K562 (cell line): ENCODE measurements at regions of chr1 and their contacts with region 1.

Region 1: DNA sequence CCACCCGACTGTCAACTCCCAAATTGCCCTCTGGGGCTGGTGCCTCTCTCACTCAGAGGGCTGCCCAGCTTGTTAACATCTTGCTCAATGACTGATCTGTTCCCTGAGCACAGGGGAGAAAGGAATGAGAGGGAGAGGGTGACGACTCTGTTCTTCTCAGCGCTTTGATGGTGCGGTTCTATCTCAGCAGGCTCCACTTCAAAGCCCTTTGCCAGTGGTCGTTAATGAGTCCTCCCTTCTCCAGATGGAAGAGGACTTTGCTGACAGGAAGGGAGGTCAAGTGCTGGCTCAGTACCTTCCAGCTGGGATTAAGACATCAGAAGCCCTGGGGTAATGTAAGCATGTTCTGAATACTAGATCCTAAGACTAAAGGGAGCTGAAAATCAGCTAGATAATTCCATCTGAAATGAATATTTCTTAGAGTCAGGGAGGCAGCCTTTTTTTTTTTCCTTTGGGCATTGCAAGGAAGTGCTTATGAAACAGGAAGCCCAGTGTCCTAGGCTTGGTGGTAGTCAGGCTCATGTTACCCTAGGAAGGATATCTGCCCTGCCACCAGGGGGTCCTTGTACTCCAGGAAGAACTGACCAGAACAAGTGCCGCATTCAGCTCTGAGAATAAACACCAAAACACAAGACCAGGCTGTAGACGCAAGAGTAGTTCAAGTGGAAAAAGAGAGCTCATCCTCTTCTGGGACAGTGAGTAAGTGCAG is 4.7 kb downstream of the FMOD start:
- DNase-seq: peak in 1 of 4 experiments; percentile 26
- ATAC-seq: peak; percentile 46; the same call in 2 of the 3 replicates
- H3K4me3 ChIP-seq: no peak overlapping the region
- H3K27ac ChIP-seq: no peak overlapping the region
- H3K4me1 ChIP-seq: peaks cover 0 to 4% of the 10 kb centered on the region in 2 experiments; a peak in 3 of 5 replicates
- H3K27me3 ChIP-seq: peaks cover 51 to 82% of the 10 kb centered on the region in 2 experiments
- CTCF ChIP-seq: peak; percentile 31 to 39 (median 32); a peak in 5 of 6 replicates
- EP300 ChIP-seq: no peak
- POLR2A ChIP-seq: no peak
- RAD21 ChIP-seq: peak in 1 of 2 experiments; percentile 51; a peak in 2 of 4 replicates

Region 2: GRCh38 chr1:203320591-203321272 is 25.5 kb before region 1 on chr1:
- CTCF ChIA-PET with region 1: no interaction called
- POLR2A ChIA-PET with region 1: no interaction called
- in situ Hi-C with region 1: no loop called
- intact Hi-C with region 1: no loop called
- DNase-seq: peak; percentile 54 to 66 (median 61)
- ATAC-seq: peak; percentile 73
- H3K4me3 ChIP-seq: no peak overlapping the region
- H3K27ac ChIP-seq: no peak overlapping the region
- H3K4me1 ChIP-seq: peaks cover 25 to 47% of the 10 kb centered on the region in 2 experiments
- H3K27me3 ChIP-seq: peaks cover 0 to 12% of the 10 kb centered on the region in 2 experiments; a peak in 3 of 5 replicates
- CTCF ChIP-seq: no peak
- EP300 ChIP-seq: no peak
- POLR2A ChIP-seq: no peak
- RAD21 ChIP-seq: no peak

Region 3: DNA sequence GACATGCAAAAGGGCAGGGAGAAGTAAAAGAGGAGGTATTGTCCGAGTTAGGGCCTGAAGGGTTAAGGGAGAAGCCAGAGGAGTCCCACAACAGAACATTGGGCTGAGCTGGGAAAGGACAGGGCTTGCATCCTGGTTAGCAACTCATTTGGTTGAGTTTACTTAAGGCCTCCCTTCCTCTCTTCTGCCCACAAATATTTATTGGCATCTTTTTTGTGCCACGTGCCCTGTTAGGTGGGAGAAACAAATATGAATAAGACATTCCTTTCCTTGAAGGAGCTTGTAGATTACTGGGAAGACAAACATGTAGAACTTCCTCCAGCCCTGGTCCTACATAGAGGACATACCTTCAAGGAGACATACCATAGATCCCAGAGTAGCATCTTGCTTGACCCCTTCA is 76.4 kb after region 1 on chr1:
- CTCF ChIA-PET with region 1: interaction called, 4 read pairs
- POLR2A ChIA-PET with region 1: no interaction called
- in situ Hi-C with region 1: no loop called
- intact Hi-C with region 1: loop called (anchors 2 kb)
- DNase-seq: no peak
- ATAC-seq: no peak
- H3K4me3 ChIP-seq: no peak overlapping the region
- H3K27ac ChIP-seq: no peak overlapping the region
- H3K4me1 ChIP-seq: no peaks in the 10 kb centered on the region
- H3K27me3 ChIP-seq: peaks cover 13 to 27% of the 10 kb centered on the region in 2 experiments; a peak in 4 of 5 replicates
- CTCF ChIP-seq: no peak
- EP300 ChIP-seq: no peak
- POLR2A ChIP-seq: no peak
- RAD21 ChIP-seq: no peak

Region 4: DNA sequence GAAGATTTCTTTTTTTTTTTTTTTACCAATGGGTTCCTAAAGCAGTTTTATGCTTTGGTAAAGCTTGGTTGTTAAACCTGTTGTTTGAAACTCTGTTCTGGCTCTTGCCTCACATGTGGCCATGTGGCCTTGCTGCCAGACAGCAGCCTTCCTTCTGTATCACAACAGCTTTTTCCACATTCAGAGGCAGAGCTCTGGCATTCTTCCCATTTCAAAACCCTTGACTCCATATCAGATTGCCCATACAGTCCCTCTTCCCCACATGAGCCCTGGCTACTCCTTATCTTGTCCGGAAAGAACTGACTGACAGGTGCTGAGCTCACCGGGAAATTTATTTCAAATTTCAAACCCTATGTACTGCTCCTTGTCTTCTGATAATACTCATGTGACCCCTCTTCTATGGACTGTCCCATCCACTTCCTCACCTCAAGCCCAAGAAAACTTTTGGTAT is 380.2 kb after region 1 on chr1:
- CTCF ChIA-PET with region 1: no interaction called
- POLR2A ChIA-PET with region 1: no interaction called
- in situ Hi-C with region 1: no loop called
- intact Hi-C with region 1: no loop called
- DNase-seq: peak; percentile 57 to 95 (median 74)
- ATAC-seq: peak; percentile 91
- H3K4me3 ChIP-seq: no peak overlapping the region
- H3K27ac ChIP-seq: peak overlapping the region; percentile 11; the same call in 2 of the 3 replicates
- H3K4me1 ChIP-seq: peaks cover 4 to 15% of the 10 kb centered on the region in 2 experiments; a peak in 4 of 5 replicates
- H3K27me3 ChIP-seq: no peaks in the 10 kb centered on the region
- CTCF ChIP-seq: no peak
- EP300 ChIP-seq: peak; percentile 90
- POLR2A ChIP-seq: no peak
- RAD21 ChIP-seq: peak; percentile 28 to 34; a peak in 2 of 4 replicates